ENCODE measurements at regions of chr10 and their contacts with region 1.

Region 1: GRCh38 chr10:88386821-88387773 is 196.0 kb downstream of the RNLS start:
- DNase-seq: no peak
- ATAC-seq: peak; percentile 92

Region 2: DNA sequence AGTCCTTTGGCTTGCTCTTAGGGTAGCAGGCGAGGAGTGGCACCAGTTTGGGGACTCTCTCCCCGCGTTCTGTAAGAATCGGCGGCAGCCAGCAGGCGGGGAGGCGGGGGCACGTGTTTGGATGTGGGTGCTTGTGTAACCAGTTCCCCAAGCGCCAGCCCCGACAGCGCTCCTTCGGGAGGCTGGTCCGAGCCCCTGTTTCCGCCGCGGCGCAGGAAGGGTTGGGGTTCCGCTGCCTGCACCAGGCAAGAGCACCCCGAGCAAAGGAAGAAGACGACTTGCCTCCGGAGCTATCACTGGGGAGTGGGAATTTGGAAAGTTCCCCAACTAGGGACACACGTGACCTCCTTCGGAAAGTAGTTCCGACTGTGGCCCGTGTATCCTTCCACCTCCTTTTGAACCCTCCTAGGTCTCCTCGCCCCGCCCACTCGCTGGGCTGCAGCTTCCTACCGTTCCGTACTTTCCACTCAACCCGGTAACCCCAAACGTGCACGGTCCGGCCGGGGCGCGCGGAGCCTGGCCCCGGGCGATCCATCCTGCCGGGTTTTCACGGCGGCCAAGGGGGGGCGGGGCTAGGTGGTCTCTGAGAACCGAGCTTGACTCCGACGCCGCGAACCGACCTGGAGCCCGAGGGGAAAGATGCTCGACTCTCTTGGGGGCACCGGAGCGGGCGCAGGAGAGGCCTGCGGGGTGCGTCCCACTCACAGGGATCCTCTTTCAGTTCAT is 525.0 kb before region 1 on chr10:
- intact Hi-C with region 1: loop called (anchors 5 kb)
- DNase-seq: peak; percentile 97
- ATAC-seq: peak; percentile 87

Region 3: GRCh38 chr10:88097536-88097935 is 289.6 kb before region 1 on chr10:
- intact Hi-C with region 1: no loop called
- DNase-seq: no peak
- ATAC-seq: no peak

Region 4: GRCh38 chr10:88243836-88244730 is 143.0 kb before region 1 on chr10:
- intact Hi-C with region 1: no loop called
- DNase-seq: peak; percentile 88
- ATAC-seq: peak; percentile 92

Region 5: GRCh38 chr10:88254091-88254490 is 133.0 kb before region 1 on chr10:
- intact Hi-C with region 1: loop called (anchors 10 kb)
- DNase-seq: peak; percentile 34
- ATAC-seq: peak; percentile 18